Panc1 (cell line): ENCODE measurements at regions of chr2 and their contacts with region 1.

Region 1: DNA sequence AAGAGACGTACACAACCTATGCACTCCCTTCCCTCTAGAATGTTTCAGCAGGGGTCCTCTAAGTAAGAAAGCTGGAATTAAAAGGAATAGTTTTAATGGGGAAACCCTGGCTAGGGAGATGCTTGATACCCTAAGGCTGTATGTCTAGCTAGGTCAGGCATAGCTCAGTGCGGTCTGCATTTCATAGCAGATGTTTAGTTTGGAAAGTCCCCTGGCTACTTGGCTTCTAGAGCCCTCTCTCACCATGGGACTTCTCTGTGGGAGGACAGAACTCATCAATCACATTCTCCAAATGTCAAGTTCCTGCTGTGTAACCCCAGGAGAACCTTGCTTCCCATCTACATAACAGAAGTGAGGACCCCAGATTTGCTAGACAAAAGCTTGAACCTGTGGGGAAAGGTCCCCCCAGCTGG is 24.1 kb upstream of the ANXA4 start:
- DNase-seq: no peak
- ATAC-seq: peak; percentile 73; the same call in 1 of the 2 replicates
- H3K4me3 ChIP-seq: no peak overlapping the region
- H3K27ac ChIP-seq: peak overlapping the region; percentile 81
- H3K4me1 ChIP-seq: peaks cover 33% of the 10 kb centered on the region; the same call in 1 of the 2 replicates
- H3K27me3 ChIP-seq: no peaks in the 10 kb centered on the region
- CTCF ChIP-seq: no peak

Region 2: GRCh38 chr2:69643602-69644505 is 74.0 kb before region 1 on chr2 and contains the start of gene AAK1:
- CTCF ChIA-PET with region 1: no interaction called
- POLR2A ChIA-PET with region 1: no interaction called
- in situ Hi-C with region 1: no loop called
- intact Hi-C with region 1: loop called (anchors 10 kb)
- DNase-seq: peak; percentile 75
- ATAC-seq: peak; percentile 92
- H3K4me3 ChIP-seq: peak within 1 kb of the TSS; percentile 60 to 79
- H3K27ac ChIP-seq: peak within 1 kb of the TSS; percentile 97
- H3K4me1 ChIP-seq: peaks cover 49% of the 10 kb centered on the region
- H3K27me3 ChIP-seq: no peaks in the 10 kb centered on the region
- CTCF ChIP-seq: no peak
- total RNA-seq, gene AAK1: 123 TPM

Region 3: DNA sequence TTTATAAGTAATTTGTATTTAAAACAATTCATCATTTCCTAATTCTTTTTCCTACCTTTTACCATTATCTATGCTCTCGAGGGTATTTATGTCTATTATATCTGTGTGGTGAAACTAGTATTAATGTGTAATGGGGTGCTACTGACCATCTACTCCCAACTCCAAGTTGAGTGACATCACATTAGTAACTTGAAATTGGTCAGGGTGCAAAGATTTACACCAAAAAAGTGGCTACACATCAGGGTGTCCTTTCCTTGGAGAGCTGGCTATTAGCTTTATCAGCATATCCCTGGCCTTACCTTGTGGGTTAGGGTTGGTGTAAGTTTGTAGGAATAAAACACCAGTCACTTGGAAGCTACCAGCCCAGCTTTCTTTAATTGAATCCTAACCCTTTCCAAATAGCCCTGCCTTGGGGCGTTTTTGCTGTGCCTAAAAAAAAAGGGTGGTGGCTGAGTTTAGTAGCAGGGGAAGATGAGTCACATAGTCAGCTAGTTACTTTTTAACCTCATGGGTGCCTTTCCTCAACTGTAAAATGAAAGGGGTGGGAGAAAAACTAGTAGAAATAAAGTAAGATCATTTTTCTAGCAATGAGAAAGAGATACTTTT is 38.1 kb after region 1 on chr2:
- CTCF ChIA-PET with region 1: no interaction called
- POLR2A ChIA-PET with region 1: no interaction called
- in situ Hi-C with region 1: no loop called
- intact Hi-C with region 1: no loop called
- DNase-seq: peak; percentile 63
- ATAC-seq: peak; percentile 81
- H3K4me3 ChIP-seq: no peak overlapping the region
- H3K27ac ChIP-seq: peak overlapping the region; percentile 27; the same call in 1 of the 2 replicates
- H3K4me1 ChIP-seq: peaks cover 27% of the 10 kb centered on the region
- H3K27me3 ChIP-seq: no peaks in the 10 kb centered on the region
- CTCF ChIP-seq: no peak